ENCODE measurements at regions of chr12 and their contacts with region 1.

Region 1: GRCh38 chr12:66736931-66737330 is 58.1 kb upstream of the GRIP1 start:
- DNase-seq: no peak
- H3K4me3 Mint-ChIP-seq: no peak overlapping the region
- H3K27ac Mint-ChIP-seq: no peak overlapping the region
- H3K4me1 Mint-ChIP-seq: peaks cover 2% of the 10 kb centered on the region
- H3K27me3 Mint-ChIP-seq: peaks cover 7% of the 10 kb centered on the region

Region 2: GRCh38 chr12:66612090-66612775 is 124.7 kb before region 1 on chr12:
- CTCF ChIA-PET with region 1: no interaction called
- POLR2A ChIA-PET with region 1: no interaction called
- DNase-seq: no peak
- H3K4me3 Mint-ChIP-seq: no peak overlapping the region
- H3K27ac Mint-ChIP-seq: no peak overlapping the region
- H3K4me1 Mint-ChIP-seq: no peaks in the 10 kb centered on the region
- H3K27me3 Mint-ChIP-seq: no peaks in the 10 kb centered on the region

Region 3: DNA sequence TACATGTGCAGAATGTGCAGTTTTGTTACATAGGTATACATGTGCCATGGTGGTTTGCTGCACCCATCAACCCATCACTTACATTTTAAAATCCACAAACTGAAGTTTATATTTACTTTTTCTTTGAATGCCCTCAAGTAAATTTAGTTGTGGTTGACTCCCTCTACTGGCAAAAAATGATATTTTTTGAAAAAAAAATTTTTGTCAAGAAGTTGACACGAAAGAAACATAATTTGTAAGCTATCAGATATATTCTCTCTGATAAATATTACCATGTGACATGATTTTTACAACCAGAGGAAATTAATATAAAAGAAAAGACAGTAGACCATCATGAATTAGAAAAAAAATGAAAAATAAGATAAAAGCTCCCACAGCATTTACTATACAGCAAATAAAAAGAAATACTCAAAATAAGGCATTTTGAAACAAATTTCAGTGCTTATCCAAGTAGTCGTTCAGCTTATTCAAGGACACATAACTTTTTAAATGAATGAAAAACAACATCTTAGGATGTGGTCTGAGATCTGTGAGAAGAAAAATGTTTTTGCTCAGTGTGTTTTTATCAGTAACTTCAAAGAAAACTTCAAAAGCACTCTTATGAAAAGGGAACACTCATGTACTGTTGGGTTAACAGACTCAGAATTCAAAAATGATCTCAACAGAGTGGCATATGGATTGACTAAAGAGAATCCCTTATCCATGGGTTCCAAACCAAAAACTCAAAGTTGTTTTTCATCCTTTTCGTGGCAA is 28.1 kb before region 1 on chr12:
- CTCF ChIA-PET with region 1: no interaction called
- POLR2A ChIA-PET with region 1: no interaction called
- DNase-seq: no peak
- H3K4me3 Mint-ChIP-seq: peak overlapping the region; percentile 50
- H3K27ac Mint-ChIP-seq: peak overlapping the region; percentile 90
- H3K4me1 Mint-ChIP-seq: peaks cover 32% of the 10 kb centered on the region
- H3K27me3 Mint-ChIP-seq: peaks cover 5% of the 10 kb centered on the region

Region 4: DNA sequence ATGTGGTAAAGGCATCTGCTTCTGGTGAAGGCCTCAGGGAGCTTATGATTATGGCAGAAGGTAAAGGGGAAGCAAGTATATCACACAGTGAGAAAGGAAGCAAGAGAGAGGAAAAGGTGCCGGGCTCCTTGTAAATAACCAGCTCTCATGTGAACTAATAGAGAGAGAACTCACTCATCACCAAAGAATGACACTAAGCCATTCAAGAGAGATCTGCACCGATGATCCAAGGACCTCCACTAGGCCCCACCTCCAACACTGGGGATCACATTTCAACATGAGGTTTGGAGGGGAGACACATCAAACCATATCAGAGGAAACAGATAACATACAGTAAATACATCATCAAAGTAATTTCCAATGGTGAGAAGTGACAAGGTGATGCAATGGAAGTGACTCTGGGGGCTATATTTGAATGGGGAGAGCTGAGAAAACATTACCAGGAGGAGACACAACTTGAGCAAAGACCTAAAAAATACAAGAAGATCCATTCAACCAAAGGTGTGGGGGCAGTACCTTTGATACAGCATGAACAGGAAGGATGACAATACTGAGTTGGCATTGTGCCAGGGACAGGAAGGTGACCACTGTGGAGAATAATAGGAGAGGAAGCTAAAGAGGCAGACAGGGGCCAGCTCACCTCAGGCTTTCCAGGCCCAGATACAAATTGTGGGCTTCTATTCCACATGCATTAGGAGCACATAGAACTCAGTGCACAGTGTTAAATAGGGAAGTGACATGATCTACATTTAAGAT is 76.4 kb after region 1 on chr12:
- CTCF ChIA-PET with region 1: no interaction called
- POLR2A ChIA-PET with region 1: interaction called, 16 read pairs
- DNase-seq: no peak
- H3K4me3 Mint-ChIP-seq: no peak overlapping the region
- H3K27ac Mint-ChIP-seq: no peak overlapping the region
- H3K4me1 Mint-ChIP-seq: peaks cover 9% of the 10 kb centered on the region
- H3K27me3 Mint-ChIP-seq: no peaks in the 10 kb centered on the region

Measured in activated CD4-positive, alpha-beta T cell treated with anti-CD3 and anti-CD28 coated beads, Interleukin-2, amount 10 ng/mL, durations not matched to agents 7 days and 5 days (primary cell).